ENCODE measurements at regions of chr6 and their contacts with region 1.

Region 1: DNA sequence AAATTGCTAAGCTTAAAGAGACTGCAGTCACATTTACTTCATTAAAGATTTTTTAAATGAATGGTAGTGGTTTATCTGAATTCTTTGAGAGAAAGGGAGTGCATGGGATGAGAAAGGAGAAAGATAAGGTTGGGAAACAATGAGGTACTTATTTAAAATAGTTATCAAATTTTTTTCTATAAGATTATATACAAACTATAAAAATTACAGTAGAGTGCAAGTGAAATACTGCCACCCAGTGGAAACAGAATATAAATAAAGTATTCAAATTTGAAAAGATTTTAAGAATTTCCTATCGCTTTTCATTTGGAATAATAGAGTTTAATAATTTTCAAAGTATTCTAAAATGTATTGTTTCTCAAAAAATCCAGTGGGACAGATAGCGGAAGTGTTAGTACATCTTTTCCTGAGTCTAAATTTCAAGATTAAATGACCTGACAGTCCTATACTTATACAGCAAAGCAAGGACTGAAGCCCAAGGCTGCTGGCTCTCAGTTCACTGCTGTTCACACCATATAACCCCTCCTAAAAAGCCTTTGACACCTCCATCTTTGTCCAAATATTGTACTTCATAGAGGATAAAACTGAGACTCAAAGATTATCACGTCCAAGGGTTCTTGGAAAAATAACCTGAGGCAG is 31.1 kb downstream of the EPM2A start:
- DNase-seq: peak; percentile 9
- H3K4me3 ChIP-seq: no peak overlapping the region
- H3K27ac ChIP-seq: no peak overlapping the region
- H3K4me1 ChIP-seq: peaks cover 0 to 9% of the 10 kb centered on the region in 2 experiments; a peak in 2 of 4 replicates
- H3K27me3 ChIP-seq: no peaks in the 10 kb centered on the region
- CTCF ChIP-seq: peak; percentile 63
- EP300 ChIP-seq: no peak
- RAD21 ChIP-seq: peak; percentile 51

Region 2: DNA sequence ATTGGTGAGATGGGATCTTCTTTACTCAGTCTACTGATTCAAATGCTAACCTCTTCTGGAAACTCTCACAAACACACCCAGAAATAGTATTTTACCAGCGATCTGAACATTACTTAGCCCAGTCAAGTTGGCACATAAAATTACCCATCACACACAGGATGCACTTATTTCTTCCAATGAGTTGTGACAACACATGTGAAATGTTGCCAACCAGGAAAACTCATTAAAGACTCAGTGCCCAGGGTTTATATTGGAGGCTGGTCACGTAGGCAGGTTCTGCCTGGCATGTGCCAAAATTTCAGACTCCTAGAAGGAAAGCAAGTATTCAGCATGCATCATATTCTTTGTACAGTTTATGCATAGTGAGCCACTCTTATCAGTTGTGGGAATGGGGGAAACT is 412.2 kb before region 1 on chr6:
- CTCF ChIA-PET with region 1: no interaction called
- POLR2A ChIA-PET with region 1: no interaction called
- DNase-seq: no peak
- H3K4me3 ChIP-seq: no peak overlapping the region
- H3K27ac ChIP-seq: no peak overlapping the region
- H3K4me1 ChIP-seq: no peaks in the 10 kb centered on the region
- H3K27me3 ChIP-seq: no peaks in the 10 kb centered on the region
- CTCF ChIP-seq: no peak
- EP300 ChIP-seq: no peak
- RAD21 ChIP-seq: no peak

Region 3: GRCh38 chr6:145694083-145694737 is 10.1 kb before region 1 on chr6:
- CTCF ChIA-PET with region 1: interaction called, 13 read pairs
- POLR2A ChIA-PET with region 1: no interaction called
- DNase-seq: no peak
- H3K4me3 ChIP-seq: no peak overlapping the region
- H3K27ac ChIP-seq: no peak overlapping the region
- H3K4me1 ChIP-seq: no peaks in the 10 kb centered on the region
- H3K27me3 ChIP-seq: no peaks in the 10 kb centered on the region
- CTCF ChIP-seq: no peak
- EP300 ChIP-seq: no peak
- RAD21 ChIP-seq: no peak